ENCODE measurements at regions of chr7 and their contacts with region 1.

Region 1: GRCh38 chr7:142535123-142535779 is 214.0 kb upstream of the PRSS1 start:
- DNase-seq: peak; percentile 94
- ATAC-seq: peak; percentile 92
- H3K4me3 ChIP-seq: no peak overlapping the region
- H3K27ac ChIP-seq: no peak overlapping the region
- H3K4me1 ChIP-seq: peaks cover 24% of the 10 kb centered on the region
- H3K27me3 ChIP-seq: no peaks in the 10 kb centered on the region
- CTCF ChIP-seq: peak; percentile 94

Region 2: DNA sequence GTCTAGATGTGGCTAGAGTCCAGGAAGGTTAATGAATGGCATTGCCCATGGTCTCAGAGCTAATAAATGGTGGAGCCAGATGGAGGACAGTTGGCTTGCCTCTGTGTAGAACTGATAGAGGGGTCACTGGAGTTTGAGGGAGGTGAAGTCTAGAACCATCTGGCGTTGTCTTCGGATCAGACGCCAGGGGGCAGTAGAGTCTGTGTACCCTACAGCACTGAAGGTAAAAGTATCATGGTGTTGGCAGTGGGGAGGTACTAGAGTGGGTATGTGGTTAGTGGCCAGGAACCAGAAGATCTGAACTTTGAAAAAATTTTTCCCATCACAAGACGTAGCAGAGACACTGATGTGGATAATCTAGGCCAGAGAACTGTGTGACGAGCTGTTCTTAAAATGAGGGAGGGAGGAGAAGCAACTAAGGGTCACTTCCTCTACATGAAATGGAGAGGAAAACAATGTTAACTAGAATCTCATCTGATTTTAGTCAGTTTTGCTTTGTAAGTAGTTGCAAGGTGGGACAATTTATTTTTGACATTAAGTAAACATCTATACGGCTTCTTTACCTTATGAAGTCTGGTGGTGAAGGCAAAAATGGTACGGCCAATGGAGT is 49.5 kb before region 1 on chr7:
- CTCF ChIA-PET with region 1: no interaction called
- POLR2A ChIA-PET with region 1: interaction called, 10 read pairs
- intact Hi-C with region 1: no loop called
- DNase-seq: no peak
- ATAC-seq: no peak
- H3K4me3 ChIP-seq: no peak overlapping the region
- H3K27ac ChIP-seq: no peak overlapping the region
- H3K4me1 ChIP-seq: peaks cover 5% of the 10 kb centered on the region
- H3K27me3 ChIP-seq: no peaks in the 10 kb centered on the region
- CTCF ChIP-seq: peak; percentile 49

Region 3: GRCh38 chr7:142568435-142569097 is 33.3 kb after region 1 on chr7:
- CTCF ChIA-PET with region 1: interaction called, 4 read pairs
- POLR2A ChIA-PET with region 1: no interaction called
- intact Hi-C with region 1: loop called (anchors 1 kb)
- DNase-seq: peak; percentile 92
- ATAC-seq: peak; percentile 95
- H3K4me3 ChIP-seq: peak overlapping the region; percentile 34; the same call in 1 of the 2 replicates
- H3K27ac ChIP-seq: peak overlapping the region; percentile 78
- H3K4me1 ChIP-seq: peaks cover 36% of the 10 kb centered on the region
- H3K27me3 ChIP-seq: no peaks in the 10 kb centered on the region
- CTCF ChIP-seq: no peak

Region 4: GRCh38 chr7:142603870-142604448 is 68.7 kb after region 1 on chr7:
- CTCF ChIA-PET with region 1: interaction called, 19 read pairs
- POLR2A ChIA-PET with region 1: no interaction called
- intact Hi-C with region 1: loop called (anchors 1 kb)
- DNase-seq: peak; percentile 84
- ATAC-seq: peak; percentile 75
- H3K4me3 ChIP-seq: peak overlapping the region; percentile 74
- H3K27ac ChIP-seq: no peak overlapping the region
- H3K4me1 ChIP-seq: peaks cover 8% of the 10 kb centered on the region
- H3K27me3 ChIP-seq: no peaks in the 10 kb centered on the region
- CTCF ChIP-seq: peak; percentile 93

Region 5: GRCh38 chr7:142669074-142669654 is 133.9 kb after region 1 on chr7:
- CTCF ChIA-PET with region 1: no interaction called
- POLR2A ChIA-PET with region 1: no interaction called
- intact Hi-C with region 1: loop called (anchors 1 kb)
- DNase-seq: peak; percentile 68
- ATAC-seq: peak; percentile 61
- H3K4me3 ChIP-seq: no peak overlapping the region
- H3K27ac ChIP-seq: no peak overlapping the region
- H3K4me1 ChIP-seq: no peaks in the 10 kb centered on the region
- H3K27me3 ChIP-seq: no peaks in the 10 kb centered on the region; the same call in 1 of the 2 replicates
- CTCF ChIP-seq: peak; percentile 62

Region 6: GRCh38 chr7:143008007-143008901 is 473.0 kb after region 1 on chr7:
- CTCF ChIA-PET with region 1: no interaction called
- POLR2A ChIA-PET with region 1: no interaction called
- intact Hi-C with region 1: loop called (anchors 10 kb)
- DNase-seq: peak; percentile 81
- ATAC-seq: peak; percentile 84
- H3K4me3 ChIP-seq: no peak overlapping the region
- H3K27ac ChIP-seq: no peak overlapping the region
- H3K4me1 ChIP-seq: peaks cover under 1% of the 10 kb centered on the region
- H3K27me3 ChIP-seq: peaks cover 31% of the 10 kb centered on the region
- CTCF ChIP-seq: peak; percentile 87

Measured in PC-3 (cell line).